Activated T-helper 1 cell treated with anti-CD3 and anti-CD28 coated beads, Interleukin-12 subunit alpha, Interleukin-12 subunit beta, Interleukin-2, Interleukin-4 antibody, amounts not matched to agents 30 ng/mL and 10 ng/mL and 1 ng/mL, durations not matched to agents 14 hours and 24 hours and 36 hours (primary cell): ENCODE measurements at regions of chr11 and their contacts with region 1.

Region 1: GRCh38 chr11:35087648-35088047 is 51.3 kb upstream of the CD44 start:
- DNase-seq: peak; percentile 9
- H3K4me3 Mint-ChIP-seq: no peak overlapping the region
- H3K27ac Mint-ChIP-seq: peak overlapping the region; percentile 42
- H3K4me1 Mint-ChIP-seq: peaks cover 50% of the 10 kb centered on the region
- H3K27me3 Mint-ChIP-seq: no peaks in the 10 kb centered on the region

Region 2: DNA sequence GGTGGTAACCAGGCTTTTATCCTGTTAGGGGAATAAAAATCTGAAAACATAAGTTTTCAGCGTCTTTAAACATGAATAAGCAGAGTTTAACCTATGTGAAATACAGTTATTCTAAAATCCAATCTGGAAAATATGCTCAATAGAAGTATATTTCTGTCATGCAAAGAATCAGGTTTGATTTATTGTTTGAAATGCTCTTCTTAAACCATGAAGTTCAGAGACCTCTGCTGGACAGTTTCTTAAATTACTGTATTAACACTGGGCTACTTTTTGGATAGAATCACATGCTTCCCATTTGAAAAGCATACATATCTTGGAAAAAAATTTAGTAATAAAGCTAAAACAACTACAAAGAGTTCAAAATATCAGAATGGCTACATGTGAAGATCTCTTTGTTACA is 196.8 kb before region 1 on chr11:
- intact Hi-C with region 1: no loop called
- DNase-seq: no peak
- H3K4me3 Mint-ChIP-seq: no peak overlapping the region
- H3K27ac Mint-ChIP-seq: no peak overlapping the region
- H3K4me1 Mint-ChIP-seq: no peaks in the 10 kb centered on the region
- H3K27me3 Mint-ChIP-seq: no peaks in the 10 kb centered on the region

Region 3: DNA sequence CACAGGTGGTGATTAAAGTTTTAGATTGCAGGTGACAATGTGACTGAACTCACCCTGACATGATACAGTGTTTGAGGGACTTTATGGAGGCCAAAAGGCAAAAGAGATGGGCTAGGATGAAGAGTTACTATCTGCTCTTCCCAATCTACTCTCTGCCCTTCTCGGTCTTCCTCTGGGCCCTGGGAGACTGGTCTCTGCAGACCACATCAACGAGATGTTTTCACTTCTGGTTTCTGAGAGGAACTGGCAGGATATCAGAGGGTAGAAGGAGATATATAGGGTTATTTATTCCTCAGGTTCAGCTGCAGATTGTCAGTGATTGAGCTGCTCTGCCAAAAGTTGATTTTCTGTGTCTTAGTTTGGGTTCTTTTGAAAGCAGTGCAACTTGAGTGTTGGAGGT is 18.9 kb after region 1 on chr11:
- intact Hi-C with region 1: loop called (anchors 2 kb)
- DNase-seq: no peak
- H3K4me3 Mint-ChIP-seq: no peak overlapping the region
- H3K27ac Mint-ChIP-seq: no peak overlapping the region
- H3K4me1 Mint-ChIP-seq: peaks cover 39% of the 10 kb centered on the region
- H3K27me3 Mint-ChIP-seq: peaks cover 5% of the 10 kb centered on the region

Region 4: DNA sequence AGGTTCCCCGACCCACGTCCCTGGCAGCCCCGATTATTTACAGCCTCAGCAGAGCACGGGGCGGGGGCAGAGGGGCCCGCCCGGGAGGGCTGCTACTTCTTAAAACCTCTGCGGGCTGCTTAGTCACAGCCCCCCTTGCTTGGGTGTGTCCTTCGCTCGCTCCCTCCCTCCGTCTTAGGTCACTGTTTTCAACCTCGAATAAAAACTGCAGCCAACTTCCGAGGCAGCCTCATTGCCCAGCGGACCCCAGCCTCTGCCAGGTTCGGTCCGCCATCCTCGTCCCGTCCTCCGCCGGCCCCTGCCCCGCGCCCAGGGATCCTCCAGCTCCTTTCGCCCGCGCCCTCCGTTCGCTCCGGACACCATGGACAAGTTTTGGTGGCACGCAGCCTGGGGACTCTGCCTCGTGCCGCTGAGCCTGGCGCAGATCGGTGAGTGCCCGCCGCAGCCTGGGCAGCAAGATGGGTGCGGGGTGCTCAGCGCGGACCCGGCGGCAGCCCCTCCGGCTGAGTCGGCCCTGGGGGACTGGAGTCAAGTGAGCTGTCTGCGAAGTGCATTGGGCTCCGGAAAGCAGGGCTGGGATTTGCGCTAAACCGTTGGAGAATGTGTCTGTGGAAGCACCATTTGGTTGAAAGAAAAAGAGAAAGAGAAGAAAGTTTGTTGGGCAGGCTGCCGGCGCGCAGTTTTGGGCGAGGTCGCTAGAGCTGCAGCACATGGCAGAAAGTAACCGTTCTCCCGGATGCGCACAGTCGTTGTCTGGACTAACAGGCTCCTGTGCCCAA is 51.5 kb after region 1 on chr11 and contains the start of gene CD44:
- intact Hi-C with region 1: loop called (anchors 1 kb)
- DNase-seq: peak; percentile 58
- H3K4me3 Mint-ChIP-seq: peak within 1 kb of the TSS; percentile 97
- H3K27ac Mint-ChIP-seq: peak within 1 kb of the TSS; percentile 93
- H3K4me1 Mint-ChIP-seq: peaks cover 55% of the 10 kb centered on the region
- H3K27me3 Mint-ChIP-seq: no peaks in the 10 kb centered on the region
- total RNA-seq, gene CD44: 547 and 550 TPM in 2 replicates